Activated CD4-positive, alpha-beta memory T cell treated with anti-CD3 and anti-CD28 coated beads for 36 hours (primary cell): ENCODE measurements at regions of chr16 and their contacts with region 1.

Region 1: GRCh38 chr16:54633943-54634362 is 296.7 kb upstream of the IRX5 start:
- DNase-seq: no peak
- H3K4me3 Mint-ChIP-seq: no peak overlapping the region
- H3K27ac Mint-ChIP-seq: no peak overlapping the region
- H3K4me1 Mint-ChIP-seq: no peaks in the 10 kb centered on the region
- H3K27me3 Mint-ChIP-seq: no peaks in the 10 kb centered on the region

Region 2: DNA sequence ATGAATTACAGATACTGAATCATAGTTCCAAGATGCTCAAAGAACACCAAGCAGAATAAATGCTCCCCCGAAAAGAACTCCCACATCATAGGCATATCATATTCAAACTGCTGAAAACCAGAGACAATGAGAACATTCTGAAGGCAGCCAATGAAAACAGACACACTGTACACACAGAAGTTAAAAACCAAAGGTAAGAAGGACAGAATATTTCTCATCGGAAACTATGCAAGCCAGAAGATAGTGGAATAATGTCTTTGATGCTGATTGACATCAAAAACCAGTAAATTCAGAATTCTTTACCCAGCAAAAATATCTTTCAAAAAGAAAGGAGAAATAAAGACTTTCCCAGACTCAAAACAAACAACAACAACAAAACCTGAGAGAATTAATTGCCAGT is 222.9 kb after region 1 on chr16:
- CTCF ChIA-PET with region 1: no interaction called
- POLR2A ChIA-PET with region 1: no interaction called
- intact Hi-C with region 1: no loop called
- DNase-seq: no peak
- H3K4me3 Mint-ChIP-seq: no peak overlapping the region
- H3K27ac Mint-ChIP-seq: no peak overlapping the region
- H3K4me1 Mint-ChIP-seq: no peaks in the 10 kb centered on the region
- H3K27me3 Mint-ChIP-seq: peaks cover 5% of the 10 kb centered on the region

Region 3: DNA sequence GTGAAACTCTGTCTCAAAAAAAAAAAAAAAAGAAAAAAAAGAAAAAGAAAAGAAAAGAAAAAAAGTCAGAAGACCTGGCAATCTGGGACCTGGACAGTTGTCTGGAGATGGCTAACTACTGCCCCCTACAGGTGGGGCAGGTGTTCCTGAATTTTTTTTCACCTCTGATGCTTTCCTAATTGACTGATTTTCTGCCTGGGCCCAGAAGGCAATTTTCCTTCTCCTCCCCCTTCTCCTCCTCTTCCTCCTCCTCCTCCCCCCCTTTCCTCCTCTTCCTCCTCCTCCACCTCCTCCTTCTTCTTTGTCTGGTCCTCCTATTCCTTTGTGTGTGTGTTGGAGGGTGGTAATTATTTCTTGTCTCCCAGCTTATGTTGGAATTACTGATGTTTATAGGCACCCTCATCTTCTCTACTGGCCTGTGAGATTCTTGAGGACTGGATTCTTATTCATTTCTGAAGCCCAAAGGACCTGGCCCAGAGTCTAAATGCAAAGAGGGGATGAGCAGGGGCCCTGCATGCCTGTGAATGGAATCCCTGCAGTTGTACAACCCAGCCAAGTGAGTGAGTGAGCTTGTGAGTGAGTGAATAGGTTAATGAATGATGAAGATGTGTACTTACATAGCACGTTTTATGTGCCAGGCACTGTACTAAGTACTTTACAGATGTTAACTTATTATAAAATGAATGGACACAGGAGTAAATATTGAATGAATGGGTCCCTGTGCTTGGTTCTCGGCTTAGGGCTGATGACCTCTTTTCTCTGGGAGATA is 323.6 kb after region 1 on chr16:
- CTCF ChIA-PET with region 1: no interaction called
- POLR2A ChIA-PET with region 1: no interaction called
- intact Hi-C with region 1: loop called (anchors 10 kb)
- DNase-seq: peak; percentile 46
- H3K4me3 Mint-ChIP-seq: no peak overlapping the region
- H3K27ac Mint-ChIP-seq: no peak overlapping the region
- H3K4me1 Mint-ChIP-seq: no peaks in the 10 kb centered on the region
- H3K27me3 Mint-ChIP-seq: peaks cover 3% of the 10 kb centered on the region